ENCODE measurements at regions of chr5 and their contacts with region 1.

Region 1: DNA sequence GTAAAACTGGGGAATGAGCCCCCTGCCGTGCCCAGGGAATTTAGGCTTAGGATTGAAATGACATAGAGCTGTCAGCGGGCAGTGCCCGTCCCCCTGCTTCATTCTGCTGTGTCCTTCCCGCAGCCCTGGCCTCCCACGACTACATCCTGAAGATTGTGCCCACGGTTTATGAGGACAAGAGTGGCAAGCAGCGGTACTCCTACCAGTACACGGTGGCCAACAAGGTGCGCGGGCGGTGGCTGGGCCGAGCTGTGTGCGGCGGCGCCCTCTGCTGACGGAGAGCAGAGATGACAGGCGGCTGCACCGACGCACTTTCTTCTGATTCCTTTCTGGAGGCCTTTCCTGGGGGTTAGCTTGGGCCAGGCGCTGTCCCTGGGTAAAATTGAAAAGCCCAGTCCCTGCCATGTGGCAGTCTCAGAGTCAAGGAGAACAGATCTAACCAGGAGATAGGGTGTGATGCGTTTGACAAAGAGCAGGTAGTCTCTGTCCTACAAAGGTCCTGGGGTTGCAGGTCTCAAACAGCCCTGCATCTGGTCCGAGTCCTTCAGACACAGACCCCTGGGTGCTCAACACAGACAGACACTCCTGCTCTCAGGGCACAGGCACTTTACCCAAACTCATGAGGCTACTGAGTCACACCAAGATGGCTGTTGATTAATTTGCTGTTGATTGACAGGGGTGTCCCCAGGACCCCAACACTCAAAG is 26.8 kb upstream of the RPL26L1 start:
- DNase-seq: peak; percentile 57 to 80 (median 67)
- H3K4me3 ChIP-seq: no peak overlapping the region
- H3K4me3 Mint-ChIP-seq: no peak overlapping the region
- H3K27ac ChIP-seq: no peak overlapping the region
- H3K27ac Mint-ChIP-seq: peak overlapping the region in 7 of 8 donors; percentile 38 to 85 (median 68)
- H3K4me1 ChIP-seq: no peaks in the 10 kb centered on the region
- H3K4me1 Mint-ChIP-seq: peaks cover 6 to 7% (median 7%) of the 10 kb centered on the region in 3 donors
- H3K27me3 ChIP-seq: no peaks in the 10 kb centered on the region
- H3K27me3 Mint-ChIP-seq: no peaks in the 10 kb centered on the region

Region 2: GRCh38 chr5:172721301-172722130 is 210.9 kb before region 1 on chr5:
- CTCF ChIA-PET with region 1: interaction called, 54 read pairs
- POLR2A ChIA-PET with region 1: no interaction called
- DNase-seq: no peak
- H3K4me3 ChIP-seq: no peak overlapping the region
- H3K4me3 Mint-ChIP-seq: peak overlapping the region in 6 of 7 donors; percentile 3 to 90 (median 70)
- H3K27ac ChIP-seq: no peak overlapping the region
- H3K27ac Mint-ChIP-seq: peak overlapping the region; percentile 45 to 96 (median 91)
- H3K4me1 ChIP-seq: peaks cover 25% of the 10 kb centered on the region
- H3K4me1 Mint-ChIP-seq: peaks cover 23 to 35% (median 27%) of the 10 kb centered on the region in 3 donors
- H3K27me3 ChIP-seq: no peaks in the 10 kb centered on the region
- H3K27me3 Mint-ChIP-seq: no peaks in the 10 kb centered on the region

Region 3: GRCh38 chr5:172770675-172771438 is 161.6 kb before region 1 on chr5 and contains the start of gene DUSP1:
- CTCF ChIA-PET with region 1: interaction called, 56 read pairs
- POLR2A ChIA-PET with region 1: interaction called, 6 read pairs
- DNase-seq: peak; percentile 96 to 100 (median 98)
- H3K4me3 ChIP-seq: peak within 1 kb of the TSS; percentile 87
- H3K4me3 Mint-ChIP-seq: peak within 1 kb of the TSS; percentile 94 to 98 (median 96)
- H3K27ac ChIP-seq: peak within 1 kb of the TSS; percentile 100
- H3K27ac Mint-ChIP-seq: peak within 1 kb of the TSS; percentile 97 to 100 (median 100)
- H3K4me1 ChIP-seq: peaks cover 48% of the 10 kb centered on the region
- H3K4me1 Mint-ChIP-seq: peaks cover 69 to 80% (median 71%) of the 10 kb centered on the region in 3 donors
- H3K27me3 ChIP-seq: no peaks in the 10 kb centered on the region
- H3K27me3 Mint-ChIP-seq: peaks cover 0 to 31% of the 10 kb centered on the region in 2 donors
- total RNA-seq, gene DUSP1: 9.4 to 10.9 TPM

Region 4: DNA sequence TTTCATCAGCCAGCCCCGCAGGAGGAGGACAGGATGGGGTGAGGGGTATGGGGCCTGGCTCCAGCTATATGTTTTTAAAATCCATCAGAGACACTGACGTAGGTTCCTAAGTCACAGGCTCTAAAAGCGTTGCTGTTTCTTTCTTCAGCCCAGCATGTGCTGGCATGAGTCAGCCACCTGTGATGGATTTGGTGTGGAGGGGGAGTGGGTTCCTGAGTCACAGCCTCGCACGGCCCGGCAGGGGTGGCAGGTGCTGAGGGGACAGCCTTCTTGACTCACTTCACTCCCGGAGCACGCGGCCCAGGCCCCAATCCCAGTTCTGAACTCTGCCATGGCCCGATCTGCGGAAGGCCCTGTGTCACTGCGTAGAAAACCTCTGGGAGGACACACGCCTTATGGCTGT is 12.0 kb before region 1 on chr5:
- CTCF ChIA-PET with region 1: interaction called, 14 read pairs
- POLR2A ChIA-PET with region 1: interaction called, 3 read pairs
- DNase-seq: no peak
- H3K4me3 ChIP-seq: no peak overlapping the region
- H3K4me3 Mint-ChIP-seq: peak overlapping the region in 1 of 7 donors; percentile 44
- H3K27ac ChIP-seq: no peak overlapping the region
- H3K27ac Mint-ChIP-seq: peak overlapping the region in 2 of 8 donors; percentile 46 to 61
- H3K4me1 ChIP-seq: peaks cover 15% of the 10 kb centered on the region
- H3K4me1 Mint-ChIP-seq: peaks cover 22 to 34% (median 25%) of the 10 kb centered on the region in 3 donors
- H3K27me3 ChIP-seq: no peaks in the 10 kb centered on the region
- H3K27me3 Mint-ChIP-seq: no peaks in the 10 kb centered on the region

Measured in CD8-positive, alpha-beta memory T cell (primary cell).